ENCODE measurements at regions of chr13 and their contacts with region 1.

Region 1: GRCh38 chr13:70755456-70755855 is 647.2 kb upstream of the KLHL1 start:
- DNase-seq: no peak
- ATAC-seq: no peak
- H3K4me3 ChIP-seq: no peak overlapping the region
- H3K4me3 Mint-ChIP-seq: no peak overlapping the region
- H3K27ac ChIP-seq: no peak overlapping the region
- H3K27ac Mint-ChIP-seq: no peak overlapping the region
- H3K4me1 ChIP-seq: no peaks in the 10 kb centered on the region
- H3K4me1 Mint-ChIP-seq: no peaks in the 10 kb centered on the region
- H3K27me3 ChIP-seq: no peaks in the 10 kb centered on the region
- H3K27me3 Mint-ChIP-seq: no peaks in the 10 kb centered on the region

Region 2: DNA sequence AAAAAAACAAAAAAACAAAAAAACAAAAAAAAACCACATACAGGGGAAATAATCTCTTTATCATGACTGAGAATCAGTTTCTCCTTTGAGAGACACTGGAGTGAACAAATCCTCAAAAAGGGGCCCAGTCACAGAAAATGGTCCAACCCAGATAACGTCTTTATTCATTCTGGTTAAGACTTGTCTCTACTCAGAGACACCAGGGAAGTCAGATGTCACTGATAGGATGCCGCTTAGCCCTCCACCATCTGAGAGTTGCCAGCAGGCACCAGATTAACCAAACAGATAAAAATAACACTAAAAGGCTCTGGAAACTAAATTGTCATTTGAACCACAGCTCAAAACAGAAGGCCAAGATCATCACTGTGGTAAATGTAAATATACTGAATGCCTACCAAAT is 1811.2 kb before region 1 on chr13:
- CTCF ChIA-PET with region 1: no interaction called
- POLR2A ChIA-PET with region 1: interaction called in 1 of 2 experiments, 11 read pairs
- DNase-seq: no peak
- ATAC-seq: no peak
- H3K4me3 ChIP-seq: no peak overlapping the region
- H3K4me3 Mint-ChIP-seq: no peak overlapping the region
- H3K27ac ChIP-seq: no peak overlapping the region
- H3K27ac Mint-ChIP-seq: no peak overlapping the region
- H3K4me1 ChIP-seq: no peaks in the 10 kb centered on the region
- H3K4me1 Mint-ChIP-seq: no peaks in the 10 kb centered on the region
- H3K27me3 ChIP-seq: no peaks in the 10 kb centered on the region
- H3K27me3 Mint-ChIP-seq: no peaks in the 10 kb centered on the region

Measured in T-cell (primary cell).